HepG2 (cell line): ENCODE measurements at regions of chr12 and their contacts with region 1.

Region 1: DNA sequence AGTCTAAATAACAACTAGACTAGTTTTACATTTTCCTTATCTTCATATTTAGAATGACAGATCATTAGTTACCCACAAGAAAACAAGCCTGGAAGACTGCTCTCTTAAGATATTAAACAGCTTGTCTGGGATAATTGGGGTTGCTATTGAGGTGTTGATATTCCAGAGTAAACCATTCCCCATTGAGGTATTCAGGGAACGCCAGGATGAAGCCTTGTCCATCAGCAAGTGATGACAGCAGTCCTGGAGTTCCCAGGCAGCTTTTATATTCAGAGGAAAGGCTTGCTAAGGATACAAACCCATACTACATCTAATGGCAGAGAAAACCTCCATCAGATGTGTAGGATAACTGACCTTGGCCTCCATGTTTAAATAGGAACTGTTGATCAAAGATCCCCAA is 168.4 kb downstream of the MSRB3 start:
- DNase-seq: no peak
- ATAC-seq: no peak
- H3K4me3 ChIP-seq: no peak overlapping the region
- H3K27ac ChIP-seq: no peak overlapping the region
- H3K4me1 ChIP-seq: no peaks in the 10 kb centered on the region
- H3K27me3 ChIP-seq: no peaks in the 10 kb centered on the region
- CTCF ChIP-seq: no peak
- EP300 ChIP-seq: no peak
- POLR2A ChIP-seq: no peak
- RAD21 ChIP-seq: no peak

Region 2: GRCh38 chr12:65432606-65433005 is 14.3 kb before region 1 on chr12:
- CTCF ChIA-PET with region 1: no interaction called
- POLR2A ChIA-PET with region 1: no interaction called
- in situ Hi-C with region 1: no loop called
- intact Hi-C with region 1: loop called (anchors 1 kb)
- DNase-seq: no peak
- ATAC-seq: no peak
- H3K4me3 ChIP-seq: no peak overlapping the region
- H3K27ac ChIP-seq: no peak overlapping the region
- H3K4me1 ChIP-seq: no peaks in the 10 kb centered on the region
- H3K27me3 ChIP-seq: no peaks in the 10 kb centered on the region; a peak in 1 of 5 replicates
- CTCF ChIP-seq: no peak
- EP300 ChIP-seq: no peak
- POLR2A ChIP-seq: no peak
- RAD21 ChIP-seq: no peak